BJ (cell line): ENCODE measurements at regions of chr13 and their contacts with region 1.

Region 1: DNA sequence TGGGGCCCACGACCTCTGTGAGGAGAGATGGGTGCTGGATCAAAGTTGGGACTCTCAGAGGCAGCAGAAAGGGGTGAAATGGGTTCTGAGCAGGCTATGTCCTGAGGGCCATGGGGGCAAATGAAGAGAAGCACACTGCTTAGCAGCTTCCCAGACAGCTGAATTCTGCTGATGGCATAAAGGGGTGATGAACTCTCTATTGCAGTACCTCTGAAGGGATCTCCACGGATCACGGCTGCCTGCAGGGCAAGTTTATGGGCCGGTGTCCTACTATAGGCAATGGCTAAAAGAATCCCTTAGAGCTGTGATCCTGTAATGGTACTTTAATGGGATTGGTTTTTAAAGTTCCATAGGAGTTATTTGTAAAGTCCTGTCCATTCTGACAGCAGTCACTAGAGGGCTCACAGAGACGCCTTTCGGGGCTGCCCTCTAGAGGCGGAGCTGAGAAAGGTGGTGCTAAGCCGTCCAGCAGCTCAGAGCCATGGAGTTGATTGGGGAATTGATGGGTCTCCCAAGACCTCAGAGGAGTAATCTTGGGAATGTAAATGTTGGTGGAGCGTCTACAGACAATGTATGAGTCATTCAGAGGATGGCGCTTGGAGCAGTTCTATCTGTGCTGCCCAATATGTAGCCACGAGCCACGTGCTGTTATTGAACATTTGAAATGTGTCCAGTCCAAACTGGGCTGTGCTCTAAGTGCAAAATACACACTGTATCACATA is 287.3 kb downstream of the COG6 start:
- DNase-seq: no peak
- H3K4me3 ChIP-seq: no peak overlapping the region
- H3K27me3 ChIP-seq: no peaks in the 10 kb centered on the region
- CTCF ChIP-seq: peak; percentile 100

Region 2: GRCh38 chr13:39684531-39685137 is 258.1 kb before region 1 on chr13:
- CTCF ChIA-PET with region 1: interaction called, 15 read pairs
- POLR2A ChIA-PET with region 1: no interaction called
- DNase-seq: peak; percentile 4
- H3K4me3 ChIP-seq: no peak overlapping the region
- H3K27me3 ChIP-seq: no peaks in the 10 kb centered on the region
- CTCF ChIP-seq: peak; percentile 6; the same call in 1 of the 2 replicates

Region 3: DNA sequence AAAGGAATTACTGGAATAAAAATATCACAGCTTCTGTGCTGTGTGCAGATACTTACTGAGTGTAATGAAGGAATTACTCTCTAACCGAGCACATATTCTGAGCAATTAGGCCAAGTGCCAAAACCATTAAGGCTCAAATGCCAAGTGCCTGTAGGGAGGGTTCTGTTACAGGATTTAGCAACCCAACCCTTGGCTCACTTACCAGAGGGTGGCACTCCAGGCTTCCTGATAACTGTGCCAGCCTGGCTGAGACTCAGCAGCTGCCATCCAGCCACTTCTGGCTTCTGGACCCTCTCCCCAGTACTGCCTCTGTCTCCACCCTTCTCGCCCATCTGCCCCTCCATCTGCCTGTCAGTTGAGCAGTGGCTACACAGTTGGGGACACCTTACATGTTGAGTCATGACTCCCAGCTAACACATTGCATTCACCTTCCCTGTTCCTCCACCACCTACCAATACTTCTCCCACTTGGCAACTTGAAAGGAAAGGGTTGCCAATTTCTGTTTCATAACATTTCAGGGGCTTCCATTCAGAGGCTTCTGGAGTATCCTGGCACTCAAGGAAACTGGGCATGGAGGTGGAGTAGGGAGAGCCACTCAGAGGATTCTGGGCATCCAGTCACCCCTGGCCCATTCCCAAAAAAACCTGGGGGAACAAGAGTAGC is 176.8 kb before region 1 on chr13:
- CTCF ChIA-PET with region 1: interaction called, 29 read pairs
- POLR2A ChIA-PET with region 1: no interaction called
- DNase-seq: no peak
- H3K4me3 ChIP-seq: no peak overlapping the region
- H3K27me3 ChIP-seq: no peaks in the 10 kb centered on the region
- CTCF ChIP-seq: peak; percentile 18; the same call in 1 of the 2 replicates

Region 4: DNA sequence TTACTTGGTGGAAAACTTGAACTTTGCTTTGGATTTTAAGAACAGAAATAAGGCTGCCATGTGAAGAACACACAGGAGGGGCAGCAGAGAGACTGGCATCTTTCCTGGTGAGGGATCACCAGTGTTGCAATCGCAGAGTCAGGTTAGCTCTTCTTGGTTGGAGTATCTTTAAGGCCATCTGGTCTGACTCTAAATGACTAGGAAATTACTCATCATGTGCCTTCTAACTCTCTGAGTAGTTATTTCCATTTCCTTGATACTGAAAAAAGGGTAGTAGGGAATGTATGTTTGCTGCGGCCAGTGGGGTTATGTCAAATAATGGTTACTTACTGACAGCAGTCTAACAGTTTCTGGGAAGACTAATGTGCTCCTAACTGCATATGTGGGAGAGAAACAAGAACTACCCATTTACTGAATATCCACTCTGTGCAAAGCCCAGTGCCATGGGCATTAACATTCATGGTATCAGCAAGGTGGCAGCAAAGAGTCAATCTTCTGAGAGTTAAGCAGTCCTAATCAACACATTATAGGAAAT is 165.1 kb before region 1 on chr13:
- CTCF ChIA-PET with region 1: interaction called, 24 read pairs
- POLR2A ChIA-PET with region 1: no interaction called
- DNase-seq: peak; percentile 52
- H3K4me3 ChIP-seq: no peak overlapping the region
- H3K27me3 ChIP-seq: no peaks in the 10 kb centered on the region
- CTCF ChIP-seq: peak; percentile 66

Region 5: GRCh38 chr13:40682449-40683240 is 739.9 kb after region 1 on chr13:
- CTCF ChIA-PET with region 1: interaction called, 40 read pairs
- POLR2A ChIA-PET with region 1: no interaction called
- DNase-seq: no peak
- H3K4me3 ChIP-seq: no peak overlapping the region
- H3K27me3 ChIP-seq: no peaks in the 10 kb centered on the region
- CTCF ChIP-seq: peak; percentile 39; the same call in 1 of the 2 replicates